ENCODE measurements at regions of chr15 and their contacts with region 1.

Region 1: DNA sequence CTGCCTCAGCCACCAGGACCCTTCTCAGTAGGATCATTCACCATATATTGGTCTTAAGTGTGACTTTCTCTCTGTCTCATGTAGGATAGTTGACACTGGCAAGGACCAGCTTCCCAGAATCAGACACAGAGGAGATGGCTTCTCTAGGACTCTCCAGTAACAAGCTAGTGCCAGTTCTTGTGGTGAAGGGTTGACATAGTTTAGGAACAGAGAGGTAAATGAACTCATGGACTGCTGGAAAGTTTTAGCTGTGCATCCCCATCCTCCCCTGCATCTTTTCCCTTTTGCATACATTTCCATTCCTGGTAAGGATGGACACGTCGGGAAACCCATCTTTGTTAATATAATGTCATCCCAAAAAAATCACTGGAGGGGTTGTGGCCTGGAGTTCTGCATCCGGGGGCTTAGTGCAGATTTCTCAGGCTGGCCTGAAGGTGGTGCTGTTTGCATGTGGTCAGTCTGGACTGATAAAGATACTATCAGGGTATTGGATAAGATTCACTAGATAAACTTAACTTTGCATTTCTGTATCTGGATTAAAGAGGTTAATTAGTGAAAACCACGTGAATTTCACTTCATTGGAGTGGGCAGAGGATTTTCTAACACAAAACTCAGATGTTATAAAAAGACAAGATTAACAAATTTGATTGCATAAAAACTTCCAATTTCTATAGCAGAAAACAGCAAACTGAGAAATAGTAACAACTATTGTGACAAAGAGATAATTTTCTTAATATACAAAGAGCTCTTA is 110.8 kb downstream of the TBC1D2B start:
- DNase-seq: no peak
- ATAC-seq: peak; percentile 96
- H3K4me3 ChIP-seq: no peak overlapping the region
- H3K27ac ChIP-seq: no peak overlapping the region
- H3K4me1 ChIP-seq: peaks cover 6% of the 10 kb centered on the region; the same call in 1 of the 2 replicates
- H3K27me3 ChIP-seq: no peaks in the 10 kb centered on the region
- CTCF ChIP-seq: peak; percentile 83 to 85 (median 84)
- EP300 ChIP-seq: no peak
- POLR2A ChIP-seq: no peak
- RAD21 ChIP-seq: peak; percentile 86

Region 2: DNA sequence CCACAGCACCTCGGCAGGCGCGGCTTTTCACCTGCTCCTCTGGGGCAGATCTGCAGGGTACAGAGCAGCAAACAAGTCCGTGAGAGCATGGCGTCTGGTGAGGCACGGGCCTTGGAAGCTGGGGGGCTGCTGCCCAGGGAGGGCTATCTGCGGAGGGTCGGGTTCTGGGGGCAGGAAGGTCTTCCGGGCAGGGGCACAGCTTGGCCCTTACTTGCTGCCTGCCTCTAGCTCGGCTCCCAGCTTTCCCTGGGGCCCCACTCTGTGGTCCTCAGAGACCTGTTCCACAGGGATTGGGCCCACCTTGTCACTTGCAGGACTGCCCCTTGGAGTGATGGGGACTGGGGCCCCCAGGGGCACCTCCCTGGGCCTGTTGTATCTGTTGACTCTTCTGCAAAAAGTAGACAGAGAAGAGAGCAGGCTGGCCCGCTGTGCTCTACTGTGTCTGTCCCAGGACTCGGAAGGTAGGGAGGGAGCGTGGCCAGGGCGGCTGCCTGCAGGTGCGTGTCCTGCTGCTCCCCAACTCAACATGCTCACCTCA is 26.7 kb after region 1 on chr15:
- CTCF ChIA-PET with region 1: interaction called, 26 read pairs
- POLR2A ChIA-PET with region 1: no interaction called
- RAD21 ChIA-PET with region 1: no interaction called
- SMC1A ChIA-PET with region 1: interaction called, 6 read pairs
- in situ Hi-C with region 1: no loop called
- intact Hi-C with region 1: no loop called
- DNase-seq: no peak
- ATAC-seq: no peak
- H3K4me3 ChIP-seq: no peak overlapping the region
- H3K27ac ChIP-seq: peak overlapping the region; percentile 87
- H3K4me1 ChIP-seq: peaks cover 27% of the 10 kb centered on the region
- H3K27me3 ChIP-seq: no peaks in the 10 kb centered on the region
- CTCF ChIP-seq: no peak
- EP300 ChIP-seq: no peak
- POLR2A ChIP-seq: no peak
- RAD21 ChIP-seq: no peak

Region 3: DNA sequence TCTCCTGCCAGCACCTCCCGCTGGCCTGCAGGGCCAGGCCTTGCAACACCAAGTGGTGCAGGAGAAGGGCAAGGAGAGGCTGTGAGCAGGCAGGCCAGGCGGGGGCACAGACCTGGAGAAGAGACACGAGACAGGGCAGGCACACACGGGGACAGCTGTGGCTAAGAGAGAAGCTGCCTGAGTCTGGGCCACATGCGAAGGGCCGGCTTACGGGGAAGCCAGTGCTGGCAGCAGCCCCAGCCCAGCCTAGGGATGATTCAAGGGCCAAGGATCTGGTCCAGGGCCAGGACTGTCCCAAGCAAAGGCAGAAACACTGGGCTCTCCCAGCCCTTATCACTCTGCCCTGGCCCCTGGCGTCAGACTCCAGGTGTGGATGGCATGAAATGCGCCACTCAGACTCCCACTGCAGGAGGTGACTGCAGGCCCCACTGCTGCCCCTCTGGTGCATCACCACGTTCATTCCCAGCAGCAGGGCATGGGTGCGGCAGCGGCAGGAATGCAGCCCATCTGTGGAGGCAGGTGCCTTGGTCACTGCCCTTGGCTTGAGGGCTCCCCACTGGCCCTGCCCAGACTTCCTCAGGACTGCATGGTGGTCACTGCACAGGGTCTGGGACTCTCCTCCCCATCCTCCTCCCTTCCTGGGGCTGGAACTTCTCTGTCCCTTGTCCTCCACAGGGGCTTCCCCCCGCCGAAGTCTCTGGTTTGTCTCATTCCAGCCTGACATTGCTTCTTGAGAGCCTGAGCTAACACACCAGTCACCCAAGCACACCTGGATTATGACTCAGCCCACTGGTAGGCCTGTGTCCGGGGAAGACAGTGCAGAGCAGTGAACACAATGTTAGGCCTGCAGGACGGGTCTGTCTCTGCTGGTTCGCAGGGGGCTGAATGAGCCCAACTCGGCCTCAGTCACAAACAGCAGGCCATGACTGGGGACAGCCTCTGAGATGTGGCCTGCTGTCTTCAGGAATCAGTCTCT is 41.5 kb after region 1 on chr15:
- CTCF ChIA-PET with region 1: interaction called, 10 read pairs
- POLR2A ChIA-PET with region 1: no interaction called
- RAD21 ChIA-PET with region 1: interaction called, 3 read pairs
- SMC1A ChIA-PET with region 1: no interaction called
- in situ Hi-C with region 1: no loop called
- intact Hi-C with region 1: loop called (anchors 5 kb)
- DNase-seq: no peak
- ATAC-seq: no peak
- H3K4me3 ChIP-seq: no peak overlapping the region
- H3K27ac ChIP-seq: no peak overlapping the region
- H3K4me1 ChIP-seq: peaks cover 17% of the 10 kb centered on the region
- H3K27me3 ChIP-seq: no peaks in the 10 kb centered on the region
- CTCF ChIP-seq: no peak
- EP300 ChIP-seq: no peak
- POLR2A ChIP-seq: no peak
- RAD21 ChIP-seq: no peak

Region 4: DNA sequence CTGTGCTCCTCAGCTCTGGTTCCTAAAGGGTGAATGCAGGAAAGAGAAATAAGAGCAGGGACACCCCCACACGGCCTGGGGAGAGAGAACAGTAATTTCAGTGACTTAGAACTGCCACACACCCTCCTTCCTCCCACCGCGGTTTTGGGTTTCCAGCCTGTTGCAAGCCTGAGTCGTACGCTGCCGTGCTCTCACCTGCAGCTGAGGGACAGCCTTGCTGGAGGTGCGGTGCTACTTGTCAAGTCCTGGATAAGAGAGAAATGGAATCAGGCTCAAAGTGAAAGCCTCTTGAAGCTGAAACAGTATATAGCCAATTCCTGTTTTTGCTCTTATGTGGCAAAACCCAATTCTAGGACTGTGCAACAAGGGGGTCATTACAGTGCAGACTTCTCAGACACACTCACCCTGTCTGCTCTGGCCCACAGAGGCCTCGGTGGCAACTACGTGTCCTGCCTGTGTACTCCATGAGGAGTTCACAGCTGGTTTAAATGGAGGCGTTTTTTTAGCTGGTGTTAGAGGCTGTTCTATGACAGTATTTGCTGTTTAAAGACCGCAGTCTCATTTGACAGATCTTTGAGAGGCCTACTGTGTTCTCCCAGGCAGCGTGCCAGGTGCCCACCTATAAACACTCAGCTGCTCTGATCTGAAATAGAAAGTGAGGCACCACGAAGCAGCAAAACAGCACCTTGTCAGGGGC is 67.9 kb after region 1 on chr15:
- CTCF ChIA-PET with region 1: interaction called, 18 read pairs
- POLR2A ChIA-PET with region 1: no interaction called
- RAD21 ChIA-PET with region 1: no interaction called
- SMC1A ChIA-PET with region 1: interaction called, 20 read pairs
- in situ Hi-C with region 1: no loop called
- intact Hi-C with region 1: no loop called
- DNase-seq: peak; percentile 66
- ATAC-seq: peak; percentile 92
- H3K4me3 ChIP-seq: no peak overlapping the region; the same call in 1 of the 2 replicates
- H3K27ac ChIP-seq: peak overlapping the region; percentile 4
- H3K4me1 ChIP-seq: peaks cover 40% of the 10 kb centered on the region
- H3K27me3 ChIP-seq: no peaks in the 10 kb centered on the region
- CTCF ChIP-seq: peak in 1 of 3 experiments; percentile 14; a peak in 1 of 6 replicates
- EP300 ChIP-seq: 0 out of 4 replicates have a peak, but pooled peaks of 1 of the 2 experiments have one; percentile 26
- POLR2A ChIP-seq: no peak
- RAD21 ChIP-seq: peak; percentile 24; the same call in 1 of the 2 replicates

Region 5: DNA sequence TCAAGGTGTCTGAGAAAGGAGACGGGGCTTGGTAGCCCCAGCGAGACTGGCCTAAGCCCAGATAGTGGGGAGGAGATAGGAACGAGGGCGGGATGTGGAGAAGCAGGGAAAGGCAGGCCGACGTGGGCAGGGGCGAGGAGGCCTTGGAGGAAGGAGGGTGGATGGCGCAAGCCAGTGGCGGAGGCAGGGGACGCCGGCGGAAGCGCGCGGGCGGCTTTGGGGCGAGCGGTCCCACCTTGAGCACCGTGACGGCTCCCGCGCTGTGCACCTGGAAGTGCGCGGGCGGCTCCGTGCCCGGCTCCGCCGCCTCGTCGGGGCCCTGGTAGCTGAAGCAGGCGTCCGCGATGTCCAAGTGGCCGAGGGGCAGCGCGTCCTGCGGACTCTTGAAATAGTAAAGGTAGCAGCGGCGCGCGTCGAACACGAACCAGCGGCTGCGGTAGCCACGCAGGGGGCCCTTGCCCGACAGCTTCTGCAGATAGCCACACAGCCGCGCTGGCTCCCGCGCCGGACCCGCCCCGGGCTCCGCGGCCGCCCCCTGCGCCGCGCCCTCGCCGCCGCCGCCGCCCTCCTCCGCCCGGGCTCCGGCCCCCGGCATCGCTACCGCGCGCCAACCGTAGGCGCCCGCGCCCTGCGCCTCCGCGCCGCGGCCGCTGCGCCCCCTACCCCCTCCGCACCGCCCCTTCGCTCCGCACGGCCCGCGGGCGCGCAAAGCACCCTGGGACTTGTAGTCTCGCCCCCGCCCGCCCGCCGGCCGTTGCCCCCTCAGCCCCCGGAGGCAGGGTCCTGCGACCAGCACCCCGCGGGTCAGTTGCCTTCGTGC is 110.6 kb after region 1 on chr15 and contains the start of gene TBC1D2B:
- CTCF ChIA-PET with region 1: interaction called, 46 read pairs
- POLR2A ChIA-PET with region 1: interaction called, 4 read pairs
- RAD21 ChIA-PET with region 1: interaction called, 3 read pairs
- SMC1A ChIA-PET with region 1: interaction called, 6 read pairs
- in situ Hi-C with region 1: no loop called
- intact Hi-C with region 1: no loop called
- DNase-seq: no peak
- ATAC-seq: peak; percentile 81
- H3K4me3 ChIP-seq: peak within 1 kb of the TSS; percentile 99
- H3K27ac ChIP-seq: peak within 1 kb of the TSS; percentile 62
- H3K4me1 ChIP-seq: peaks cover 10% of the 10 kb centered on the region
- H3K27me3 ChIP-seq: no peaks in the 10 kb centered on the region
- CTCF ChIP-seq: no peak; a peak in 1 of 6 replicates
- EP300 ChIP-seq: no peak
- POLR2A ChIP-seq: no peak
- RAD21 ChIP-seq: no peak
- polyA plus RNA-seq, gene TBC1D2B: 1.3 to 1.4 TPM

Measured in GM12878 (cell line).